PC-9 (cell line): ENCODE measurements at regions of chr6 and their contacts with region 1.

Region 1: GRCh38 chr6:17865798-17866725 is 121.4 kb downstream of the KIF13A start:
- DNase-seq: peak; percentile 93 to 99
- H3K4me3 ChIP-seq: peak overlapping the region; percentile 24; the same call in 1 of the 2 replicates
- H3K27ac ChIP-seq: peak overlapping the region; percentile 94
- H3K4me1 ChIP-seq: peaks cover 57% of the 10 kb centered on the region
- H3K27me3 ChIP-seq: no peaks in the 10 kb centered on the region
- CTCF ChIP-seq: no peak

Region 2: GRCh38 chr6:17877196-17877889 is 11.3 kb after region 1 on chr6:
- CTCF ChIA-PET with region 1: interaction called, 4 read pairs
- POLR2A ChIA-PET with region 1: interaction called, 7 read pairs
- intact Hi-C with region 1: loop called (anchors 1 kb)
- DNase-seq: peak; percentile 62 to 66
- H3K4me3 ChIP-seq: no peak overlapping the region
- H3K27ac ChIP-seq: peak overlapping the region; percentile 86
- H3K4me1 ChIP-seq: peaks cover 31% of the 10 kb centered on the region
- H3K27me3 ChIP-seq: no peaks in the 10 kb centered on the region
- CTCF ChIP-seq: no peak

Region 3: DNA sequence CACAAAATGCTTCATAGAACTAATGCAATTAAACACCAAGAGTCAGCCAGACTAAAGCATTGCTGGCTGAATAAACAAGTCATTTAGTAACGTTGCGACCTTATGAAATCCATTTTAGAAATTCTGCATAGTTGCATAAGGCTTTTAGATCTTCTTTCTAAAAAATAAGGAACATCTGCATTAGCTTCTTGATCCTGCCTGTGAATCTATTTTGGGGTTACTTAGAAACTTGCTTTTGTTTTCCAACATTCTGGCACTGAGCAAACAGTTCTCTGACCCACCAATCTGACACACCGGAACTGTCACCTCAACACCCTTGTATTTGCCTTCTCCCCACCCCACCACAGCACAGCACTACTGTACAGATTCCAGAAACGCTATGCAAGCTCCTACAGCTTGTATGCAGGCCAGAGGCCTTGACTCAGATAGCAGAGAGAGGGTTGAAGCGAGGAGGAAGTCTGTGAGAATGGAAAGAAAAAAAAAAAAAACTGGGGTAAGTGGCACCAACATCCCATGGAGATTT is 66.3 kb after region 1 on chr6:
- CTCF ChIA-PET with region 1: no interaction called
- POLR2A ChIA-PET with region 1: interaction called, 22 read pairs
- intact Hi-C with region 1: loop called (anchors 1 kb)
- DNase-seq: peak; percentile 63 to 90
- H3K4me3 ChIP-seq: peak overlapping the region; percentile 16; the same call in 1 of the 2 replicates
- H3K27ac ChIP-seq: peak overlapping the region; percentile 87
- H3K4me1 ChIP-seq: peaks cover 65% of the 10 kb centered on the region
- H3K27me3 ChIP-seq: no peaks in the 10 kb centered on the region
- CTCF ChIP-seq: no peak

Region 4: DNA sequence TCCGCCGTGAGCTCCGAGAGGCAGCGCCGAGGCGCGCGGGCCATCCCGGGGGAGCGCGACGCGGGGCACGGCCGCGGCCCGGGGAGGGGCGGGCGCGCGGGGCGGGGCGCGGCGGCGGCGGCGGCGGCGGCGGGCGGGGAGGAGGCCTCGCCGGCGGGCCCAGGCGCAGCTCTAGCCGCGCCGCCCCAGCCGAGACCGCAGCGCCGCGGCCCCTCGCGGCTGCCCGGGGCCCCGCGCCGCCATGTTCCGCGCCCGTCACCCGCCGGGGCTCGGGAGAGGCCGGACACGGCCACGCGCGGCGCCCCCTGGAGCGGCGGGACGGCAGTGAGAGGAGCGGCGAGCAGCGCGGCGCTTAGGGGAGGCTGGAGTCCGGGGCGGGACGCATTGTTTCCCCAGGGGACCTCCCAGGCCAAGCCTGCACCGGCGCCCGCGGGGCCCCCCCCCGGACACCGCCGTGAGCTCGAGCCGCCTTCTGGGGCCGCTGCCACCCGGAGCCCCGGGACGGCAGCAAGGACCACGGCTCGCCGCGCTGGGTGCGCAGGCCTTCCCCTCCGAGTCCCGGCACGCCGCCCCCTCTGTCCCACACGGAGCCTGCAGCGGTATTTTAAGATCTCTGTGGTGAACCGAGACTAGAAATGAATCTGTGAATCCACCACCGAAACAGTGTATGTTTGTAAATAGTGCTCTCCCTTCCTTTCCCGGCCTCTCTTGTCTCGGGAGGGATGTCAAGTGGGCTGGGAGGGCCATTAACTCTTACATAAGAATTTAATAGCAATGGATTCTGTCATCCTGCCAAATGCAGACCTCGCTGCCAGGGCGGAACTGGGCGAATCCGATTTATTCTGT is 121.7 kb after region 1 on chr6 and contains the start of gene KIF13A:
- CTCF ChIA-PET with region 1: no interaction called
- POLR2A ChIA-PET with region 1: no interaction called
- intact Hi-C with region 1: loop called (anchors 2 kb)
- DNase-seq: peak; percentile 46 to 69
- H3K4me3 ChIP-seq: peak within 1 kb of the TSS; percentile 98
- H3K27ac ChIP-seq: peak within 1 kb of the TSS; percentile 45
- H3K4me1 ChIP-seq: peaks cover 59% of the 10 kb centered on the region
- H3K27me3 ChIP-seq: no peaks in the 10 kb centered on the region
- CTCF ChIP-seq: no peak
- total RNA-seq, gene KIF13A: 48.6 and 52.2 TPM in 2 replicates

Region 5: DNA sequence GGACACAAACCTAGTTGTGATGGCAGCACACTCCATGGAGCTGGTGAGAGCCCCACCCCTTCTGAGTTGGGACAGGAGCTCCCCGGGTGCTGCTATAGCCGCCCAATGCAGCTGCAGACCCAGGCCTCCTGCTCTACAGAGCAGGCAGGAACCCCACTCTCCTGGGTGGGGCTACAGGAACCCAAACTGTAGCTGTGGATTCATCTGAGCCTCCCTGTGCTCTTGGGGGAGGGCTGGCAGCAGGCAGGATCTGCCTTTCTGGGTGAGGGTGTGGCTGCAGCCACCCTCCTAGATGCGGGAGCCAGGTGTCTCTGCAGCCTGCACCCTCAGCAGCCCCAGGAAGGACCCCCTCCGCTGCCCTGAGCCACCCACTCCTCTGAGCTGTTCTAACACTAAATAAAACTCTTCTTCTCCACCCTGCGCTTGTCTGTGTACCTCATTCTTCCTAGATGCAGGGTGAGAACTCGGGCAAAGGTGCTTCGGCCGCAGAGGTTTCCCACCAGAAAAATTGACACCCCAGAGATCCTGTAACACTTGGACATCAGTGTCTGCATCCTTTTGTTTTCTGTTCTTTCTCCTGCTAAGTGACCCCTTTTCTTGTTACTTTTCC is 176.6 kb after region 1 on chr6:
- CTCF ChIA-PET with region 1: no interaction called
- POLR2A ChIA-PET with region 1: no interaction called
- intact Hi-C with region 1: loop called (anchors 5 kb)
- DNase-seq: no peak
- H3K4me3 ChIP-seq: no peak overlapping the region
- H3K27ac ChIP-seq: no peak overlapping the region
- H3K4me1 ChIP-seq: peaks cover 25% of the 10 kb centered on the region
- H3K27me3 ChIP-seq: no peaks in the 10 kb centered on the region
- CTCF ChIP-seq: no peak

Region 6: GRCh38 chr6:18076231-18076630 is 210.2 kb after region 1 on chr6:
- CTCF ChIA-PET with region 1: no interaction called
- POLR2A ChIA-PET with region 1: no interaction called
- intact Hi-C with region 1: no loop called
- DNase-seq: no peak
- H3K4me3 ChIP-seq: no peak overlapping the region
- H3K27ac ChIP-seq: no peak overlapping the region
- H3K4me1 ChIP-seq: no peaks in the 10 kb centered on the region
- H3K27me3 ChIP-seq: no peaks in the 10 kb centered on the region
- CTCF ChIP-seq: no peak